Activated CD4-positive, alpha-beta memory T cell treated with anti-CD3 and anti-CD28 coated beads for 36 hours (primary cell): ENCODE measurements at regions of chr7 and their contacts with region 1.

Region 1: GRCh38 chr7:158976849-158977593 is 120.7 kb downstream of the DYNC2I1 start:
- DNase-seq: peak; percentile 91
- H3K4me3 Mint-ChIP-seq: peak overlapping the region; percentile 71
- H3K27ac Mint-ChIP-seq: peak overlapping the region; percentile 65
- H3K4me1 Mint-ChIP-seq: peaks cover 19% of the 10 kb centered on the region
- H3K27me3 Mint-ChIP-seq: no peaks in the 10 kb centered on the region

Region 2: DNA sequence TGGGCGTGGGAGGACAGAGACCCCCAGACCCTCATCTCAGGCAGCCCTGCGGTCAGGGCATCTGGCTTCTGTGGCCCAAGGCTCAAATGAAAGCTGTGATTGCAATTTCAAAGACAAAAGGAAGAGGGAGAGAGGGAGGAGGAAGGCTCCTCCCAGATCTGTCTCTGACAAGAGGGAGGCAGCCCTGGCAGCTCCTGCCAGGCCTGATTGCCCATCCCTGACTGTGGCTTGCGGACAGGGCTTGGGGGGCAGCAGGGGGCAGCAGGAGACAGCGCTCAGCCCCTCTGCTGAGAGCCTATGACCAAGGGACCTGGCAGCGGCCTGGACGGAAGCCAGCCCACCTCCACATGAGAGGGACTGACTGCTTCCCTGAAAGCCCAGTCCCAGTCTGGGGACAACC is 481.2 kb before region 1 on chr7:
- CTCF ChIA-PET with region 1: interaction called, 4 read pairs
- POLR2A ChIA-PET with region 1: no interaction called
- intact Hi-C with region 1: loop called (anchors 1 kb)
- DNase-seq: peak; percentile 39
- H3K4me3 Mint-ChIP-seq: no peak overlapping the region
- H3K27ac Mint-ChIP-seq: no peak overlapping the region
- H3K4me1 Mint-ChIP-seq: peaks cover 4% of the 10 kb centered on the region
- H3K27me3 Mint-ChIP-seq: peaks cover 7% of the 10 kb centered on the region

Region 3: DNA sequence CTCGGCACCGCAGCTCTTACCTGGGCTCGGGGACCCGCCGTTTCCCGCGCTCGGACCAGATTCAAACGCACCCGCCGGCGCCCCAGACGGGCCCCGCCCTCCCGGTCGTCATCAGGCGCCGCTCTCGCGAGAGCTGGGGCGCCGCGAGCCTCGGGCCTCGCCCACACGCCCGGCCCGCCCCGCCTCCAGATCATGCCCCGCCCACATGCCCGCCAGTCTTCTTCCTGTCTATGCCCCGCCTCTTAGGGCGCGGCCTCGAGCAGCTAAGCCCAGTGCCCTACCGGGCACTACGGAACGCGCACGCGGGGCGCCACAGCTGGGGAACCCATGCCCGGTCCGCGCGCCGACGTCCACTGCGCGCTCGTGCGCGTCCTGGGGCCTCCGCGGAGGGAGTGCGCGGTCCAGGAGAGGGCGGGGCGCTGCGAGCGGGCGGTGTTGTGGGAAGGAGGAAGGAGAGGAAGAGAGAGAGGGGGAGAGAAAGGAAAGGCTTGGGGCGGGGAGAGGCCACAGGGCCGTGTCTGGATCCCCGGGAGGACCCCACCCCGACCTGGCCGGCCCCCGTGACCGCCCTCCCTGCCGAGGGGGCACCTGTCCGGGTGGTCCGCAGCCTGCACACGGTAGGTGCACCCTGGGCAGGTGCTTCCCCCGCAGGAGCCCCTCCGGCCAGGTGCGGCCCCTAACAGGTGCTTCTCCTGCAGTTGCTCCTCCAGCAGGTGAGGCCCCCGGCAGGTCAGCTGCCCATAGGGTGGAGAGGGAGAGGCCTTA is 272.1 kb before region 1 on chr7 and contains the start of gene NCAPG2:
- CTCF ChIA-PET with region 1: interaction called, 14 read pairs
- POLR2A ChIA-PET with region 1: no interaction called
- intact Hi-C with region 1: loop called (anchors 2 kb)
- DNase-seq: peak; percentile 98
- H3K4me3 Mint-ChIP-seq: peak within 1 kb of the TSS; percentile 84
- H3K27ac Mint-ChIP-seq: peak within 1 kb of the TSS; percentile 82
- H3K4me1 Mint-ChIP-seq: peaks cover 40% of the 10 kb centered on the region
- H3K27me3 Mint-ChIP-seq: no peaks in the 10 kb centered on the region
- total RNA-seq, gene NCAPG2: 145 to 149 TPM

Region 4: DNA sequence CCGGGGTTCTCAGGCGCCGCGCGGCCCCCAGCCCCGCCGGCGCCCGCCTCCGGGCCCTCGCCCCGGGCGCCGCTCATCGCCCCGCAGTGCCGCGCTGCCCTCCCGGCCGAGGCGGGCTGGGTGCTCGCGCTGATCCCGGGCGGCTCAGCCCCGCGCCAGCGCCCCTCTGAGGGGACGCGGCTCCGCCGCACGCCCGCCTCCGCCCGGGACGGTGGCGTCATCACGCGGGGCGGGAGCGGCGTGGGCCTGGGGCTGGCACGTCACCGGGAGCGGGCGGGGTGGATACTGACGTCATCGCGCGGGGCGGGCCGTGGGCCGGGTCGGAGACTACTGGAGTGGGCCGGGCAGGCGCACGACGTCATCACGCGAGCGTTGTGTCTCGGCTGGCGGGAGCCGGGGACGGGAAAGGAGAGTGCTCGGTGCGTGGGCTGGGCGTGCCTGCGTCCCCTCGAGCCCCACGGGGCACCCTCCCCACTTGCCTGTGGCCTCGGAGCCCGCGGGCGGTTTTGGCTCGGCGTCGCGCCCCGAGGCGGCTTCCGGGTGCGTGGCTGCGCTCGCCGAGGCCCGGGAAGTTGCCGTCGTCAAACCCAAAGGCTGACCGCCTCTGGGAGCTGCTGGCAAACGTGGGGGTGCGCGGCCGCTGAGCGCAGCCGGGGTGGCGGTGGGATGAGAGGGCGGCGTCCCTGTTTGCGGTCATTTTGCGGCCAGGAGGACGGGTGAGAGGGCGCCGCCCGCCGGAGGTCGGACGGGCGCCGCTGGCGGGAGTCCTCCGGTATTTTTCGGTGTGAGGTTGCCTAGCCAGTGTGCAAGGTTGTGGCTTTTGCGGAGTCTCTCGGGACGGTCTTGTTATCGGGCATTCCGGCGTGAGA is 147.4 kb before region 1 on chr7 and contains the start of gene ESYT2:
- CTCF ChIA-PET with region 1: interaction called, 6 read pairs
- POLR2A ChIA-PET with region 1: interaction called, 5 read pairs
- intact Hi-C with region 1: loop called (anchors 5 kb)
- DNase-seq: peak; percentile 99
- H3K4me3 Mint-ChIP-seq: peak within 1 kb of the TSS; percentile 85
- H3K27ac Mint-ChIP-seq: peak within 1 kb of the TSS; percentile 87
- H3K4me1 Mint-ChIP-seq: peaks cover 33% of the 10 kb centered on the region
- H3K27me3 Mint-ChIP-seq: no peaks in the 10 kb centered on the region
- total RNA-seq, gene ESYT2: 62.4 to 64.2 TPM

Region 5: GRCh38 chr7:158885624-158886023 is 91.4 kb before region 1 on chr7:
- CTCF ChIA-PET with region 1: interaction called, 17 read pairs
- POLR2A ChIA-PET with region 1: no interaction called
- intact Hi-C with region 1: loop called (anchors 5 kb)
- DNase-seq: no peak
- H3K4me3 Mint-ChIP-seq: no peak overlapping the region
- H3K27ac Mint-ChIP-seq: no peak overlapping the region
- H3K4me1 Mint-ChIP-seq: no peaks in the 10 kb centered on the region
- H3K27me3 Mint-ChIP-seq: no peaks in the 10 kb centered on the region

Region 6: DNA sequence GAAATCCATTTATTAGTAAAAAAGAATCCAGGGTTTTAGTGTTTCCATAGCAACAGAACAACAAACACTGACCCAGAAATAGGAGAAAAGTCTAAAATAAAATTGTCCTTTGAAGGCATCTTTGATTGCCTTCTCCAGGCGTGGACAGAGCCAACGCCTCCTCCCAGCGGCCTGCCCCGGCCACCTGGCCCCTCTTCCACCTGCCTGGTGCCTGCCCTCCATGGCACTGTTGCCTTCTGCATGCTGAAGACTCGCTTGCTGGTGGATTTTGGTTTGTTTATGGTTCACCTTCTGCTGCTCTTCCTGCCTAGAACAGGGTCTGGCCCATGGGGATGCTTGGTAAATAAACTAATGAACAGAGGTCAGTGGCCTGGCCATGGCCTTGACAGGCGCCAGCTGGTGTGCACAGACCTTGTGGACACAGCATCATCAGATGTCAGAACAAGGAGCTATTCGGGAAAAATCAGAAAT is 13.2 kb before region 1 on chr7:
- CTCF ChIA-PET with region 1: interaction called, 17 read pairs
- POLR2A ChIA-PET with region 1: no interaction called
- intact Hi-C with region 1: no loop called
- DNase-seq: no peak
- H3K4me3 Mint-ChIP-seq: no peak overlapping the region
- H3K27ac Mint-ChIP-seq: no peak overlapping the region
- H3K4me1 Mint-ChIP-seq: no peaks in the 10 kb centered on the region
- H3K27me3 Mint-ChIP-seq: peaks cover 5% of the 10 kb centered on the region